ENCODE measurements at regions of chr1 and their contacts with region 1.

Region 1: GRCh38 chr1:229479660-229480399 is 28.3 kb downstream of the NUP133 start:
- DNase-seq: no peak
- H3K4me3 ChIP-seq: no peak overlapping the region
- H3K4me3 Mint-ChIP-seq: no peak overlapping the region
- H3K27ac ChIP-seq: no peak overlapping the region
- H3K27ac Mint-ChIP-seq: peak overlapping the region in 3 of 7 donors; percentile 3 to 41 (median 16)
- H3K4me1 ChIP-seq: no peaks in the 10 kb centered on the region
- H3K4me1 Mint-ChIP-seq: no peaks in the 10 kb centered on the region
- H3K27me3 ChIP-seq: no peaks in the 10 kb centered on the region
- H3K27me3 Mint-ChIP-seq: peaks cover 0 to 3% (median 1%) of the 10 kb centered on the region in 3 donors
- CTCF ChIP-seq: no peak

Region 2: DNA sequence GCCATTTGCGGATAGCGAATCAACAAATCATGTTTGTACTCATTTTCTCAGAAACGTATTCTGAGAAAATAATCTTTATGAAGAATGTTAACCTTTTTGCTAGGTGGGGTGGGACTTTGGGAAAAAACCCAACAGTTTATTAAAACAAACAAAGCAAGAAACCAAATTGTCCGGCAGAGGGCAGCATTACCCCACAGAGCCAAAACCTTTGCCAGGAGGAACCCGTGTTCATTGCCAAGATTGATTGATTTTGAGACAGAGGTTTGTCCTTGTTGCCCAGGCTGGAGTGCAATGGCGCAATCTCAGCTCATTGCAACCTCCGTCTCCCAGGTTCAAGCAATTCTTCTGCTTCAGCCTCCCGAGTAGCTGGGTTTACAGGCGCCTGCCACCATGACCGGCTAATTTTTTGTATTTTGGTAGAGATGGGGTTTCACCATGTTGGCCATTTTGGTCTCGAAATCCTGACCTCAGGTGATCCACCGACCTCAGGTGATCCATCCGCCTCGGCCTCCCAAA is 815.4 kb before region 1 on chr1:
- intact Hi-C with region 1: loop called in 1 of 2 experiments (anchors 2 kb)
- DNase-seq: peak; percentile 59 to 78 (median 69)
- H3K4me3 ChIP-seq: no peak overlapping the region
- H3K4me3 Mint-ChIP-seq: no peak overlapping the region
- H3K27ac ChIP-seq: no peak overlapping the region
- H3K27ac Mint-ChIP-seq: no peak overlapping the region
- H3K4me1 ChIP-seq: peaks cover 3 to 8% of the 10 kb centered on the region in 2 donors
- H3K4me1 Mint-ChIP-seq: peaks cover 8% of the 10 kb centered on the region
- H3K27me3 ChIP-seq: peaks cover 0 to 2% of the 10 kb centered on the region in 2 donors
- H3K27me3 Mint-ChIP-seq: peaks cover 9 to 15% (median 11%) of the 10 kb centered on the region in 3 donors
- CTCF ChIP-seq: peak; percentile 88